Calu3 (cell line): ENCODE measurements at regions of chr16 and their contacts with region 1.

Region 1: GRCh38 chr16:77480681-77481315 is 46.0 kb upstream of the ADAMTS18 start:
- DNase-seq: no peak
- H3K4me3 Mint-ChIP-seq: no peak overlapping the region
- H3K27ac Mint-ChIP-seq: no peak overlapping the region
- H3K4me1 Mint-ChIP-seq: no peaks in the 10 kb centered on the region
- H3K27me3 Mint-ChIP-seq: peaks cover 75% of the 10 kb centered on the region
- CTCF ChIP-seq: no peak

Region 2: DNA sequence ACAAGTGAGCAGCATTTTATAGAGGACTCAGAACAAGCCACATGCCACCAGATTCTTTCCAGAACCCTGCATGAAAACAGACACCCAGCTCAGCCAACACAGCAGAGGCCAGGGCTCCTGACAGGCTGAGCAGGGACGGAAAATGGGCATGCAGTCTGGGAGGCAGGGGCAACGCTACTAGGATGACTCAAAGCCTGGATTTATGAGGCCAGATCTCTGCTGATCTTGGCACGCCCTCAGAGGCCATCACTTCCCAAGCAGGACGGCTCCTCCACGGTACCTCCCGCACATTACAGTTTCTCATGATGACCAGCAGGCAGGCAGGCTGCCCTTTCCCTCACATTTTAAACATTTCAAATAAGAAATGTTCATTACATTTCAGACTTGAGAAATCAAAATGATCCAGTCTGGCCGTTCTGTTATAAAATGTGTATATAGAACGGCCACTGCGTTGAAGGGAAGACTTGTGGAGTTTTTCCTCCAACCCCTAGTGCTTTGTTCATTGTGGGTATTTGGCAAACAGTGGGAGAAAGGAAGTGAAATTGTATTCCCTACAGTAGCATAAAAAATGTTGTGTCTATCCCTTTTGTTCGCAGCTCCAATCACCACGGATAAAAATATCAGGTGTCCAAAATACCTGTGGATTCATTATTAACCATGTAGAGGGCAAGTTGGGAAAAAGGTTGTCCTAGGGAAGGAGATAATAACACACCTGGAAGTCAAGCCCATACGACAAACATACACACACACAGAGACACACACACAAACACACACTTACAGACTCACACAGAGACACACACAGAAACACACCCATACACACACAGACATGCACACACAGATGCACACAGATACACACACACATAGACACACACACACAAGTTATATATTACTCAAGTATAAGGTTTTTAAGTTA is 18.8 kb after region 1 on chr16:
- CTCF ChIA-PET with region 1: no interaction called
- intact Hi-C with region 1: loop called (anchors 2 kb)
- DNase-seq: no peak
- H3K4me3 Mint-ChIP-seq: no peak overlapping the region
- H3K27ac Mint-ChIP-seq: no peak overlapping the region
- H3K4me1 Mint-ChIP-seq: no peaks in the 10 kb centered on the region
- H3K27me3 Mint-ChIP-seq: peaks cover 79% of the 10 kb centered on the region
- CTCF ChIP-seq: no peak

Region 3: DNA sequence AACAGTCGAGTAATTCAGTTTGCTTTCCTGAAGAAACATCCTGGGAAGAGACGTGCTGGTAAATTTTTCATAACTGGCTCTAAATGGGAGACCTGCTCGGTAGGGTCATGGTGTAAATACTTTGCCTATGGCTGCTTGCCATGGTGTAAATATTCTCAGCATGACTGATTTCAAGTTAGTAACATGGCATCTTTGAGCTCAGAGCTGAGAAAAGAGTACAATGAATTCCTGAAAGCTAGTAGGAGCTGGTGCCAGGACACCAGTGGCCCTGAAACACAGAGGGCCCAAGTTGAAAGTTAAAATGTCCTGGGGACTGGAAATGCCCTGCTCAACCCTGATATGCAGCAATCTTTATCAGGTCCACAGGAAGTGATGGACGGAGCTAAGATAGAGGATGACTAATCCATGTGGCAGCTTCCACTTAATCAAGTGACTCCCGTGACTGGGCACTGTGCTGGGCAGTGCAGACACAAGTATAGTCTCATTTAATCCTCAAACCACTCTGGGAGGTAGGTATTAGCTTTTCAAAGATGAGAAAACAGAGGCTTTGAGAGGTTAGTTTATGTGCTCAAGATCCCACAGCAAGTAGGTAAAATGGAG is 84.1 kb after region 1 on chr16:
- CTCF ChIA-PET with region 1: no interaction called
- intact Hi-C with region 1: no loop called
- DNase-seq: no peak
- H3K4me3 Mint-ChIP-seq: no peak overlapping the region
- H3K27ac Mint-ChIP-seq: no peak overlapping the region
- H3K4me1 Mint-ChIP-seq: no peaks in the 10 kb centered on the region
- H3K27me3 Mint-ChIP-seq: peaks cover 94% of the 10 kb centered on the region
- CTCF ChIP-seq: no peak